CD8-positive, alpha-beta memory T cell (primary cell): ENCODE measurements at regions of chrX and their contacts with region 1.

Region 1: GRCh38 chrX:130079824-130080406 is 30.4 kb downstream of the ELF4 start:
- DNase-seq: peak; percentile 42 to 66 (median 54)
- H3K4me3 ChIP-seq: no peak overlapping the region
- H3K4me3 Mint-ChIP-seq: peak overlapping the region in 6 of 7 donors; percentile 3 to 70 (median 40)
- H3K27ac ChIP-seq: no peak overlapping the region
- H3K27ac Mint-ChIP-seq: peak overlapping the region; percentile 64 to 89 (median 84)
- H3K4me1 ChIP-seq: peaks cover 36% of the 10 kb centered on the region
- H3K4me1 Mint-ChIP-seq: peaks cover 46 to 54% (median 51%) of the 10 kb centered on the region in 3 donors
- H3K27me3 ChIP-seq: no peaks in the 10 kb centered on the region
- H3K27me3 Mint-ChIP-seq: peaks cover 0 to 3% of the 10 kb centered on the region in 2 donors

Region 2: DNA sequence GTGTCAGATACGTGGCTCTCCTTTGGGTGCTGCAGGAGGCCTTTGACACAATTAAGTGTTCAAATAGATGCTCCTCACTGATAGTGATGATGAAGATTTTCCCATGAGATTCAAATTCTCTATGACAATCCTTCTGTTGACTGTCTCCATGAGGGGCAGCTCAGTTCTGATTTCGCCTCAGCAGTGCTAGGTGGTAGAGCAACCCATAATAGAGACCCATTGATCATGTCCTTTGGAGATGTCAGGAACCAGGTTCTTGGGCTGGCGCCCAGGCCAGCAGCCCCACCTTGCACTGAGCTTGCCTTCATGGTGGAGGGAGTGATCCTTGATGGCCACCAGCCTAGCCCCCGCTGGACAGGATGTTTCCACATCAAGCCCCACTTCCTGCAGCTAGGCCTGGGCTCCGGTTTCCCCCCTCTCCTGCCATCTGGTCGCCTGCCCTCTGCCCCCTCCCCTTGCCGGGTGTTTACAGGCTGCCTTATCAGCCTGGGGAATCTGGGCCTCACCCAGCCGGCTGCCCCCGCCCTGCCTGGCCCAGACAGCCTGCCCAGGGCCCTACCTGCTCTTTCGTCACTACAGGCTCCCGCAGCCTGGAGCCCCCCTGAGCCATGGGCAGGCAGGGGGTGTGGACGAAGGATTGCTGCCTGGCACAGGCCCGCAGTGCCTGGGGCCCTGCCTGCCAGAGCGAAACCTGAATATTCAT is 17.7 kb after region 1 on chrX:
- CTCF ChIA-PET with region 1: interaction called, 12 read pairs
- POLR2A ChIA-PET with region 1: interaction called, 7 read pairs
- DNase-seq: peak in 4 of 5 donors; percentile 21 to 52 (median 43)
- H3K4me3 ChIP-seq: no peak overlapping the region
- H3K4me3 Mint-ChIP-seq: peak overlapping the region in 6 of 7 donors; percentile 41 to 71 (median 64)
- H3K27ac ChIP-seq: peak overlapping the region; percentile 9
- H3K27ac Mint-ChIP-seq: peak overlapping the region; percentile 84 to 98 (median 92)
- H3K4me1 ChIP-seq: peaks cover 65% of the 10 kb centered on the region
- H3K4me1 Mint-ChIP-seq: peaks cover 59 to 80% (median 70%) of the 10 kb centered on the region in 3 donors
- H3K27me3 ChIP-seq: no peaks in the 10 kb centered on the region
- H3K27me3 Mint-ChIP-seq: peaks cover 0 to 2% of the 10 kb centered on the region in 2 donors

Region 3: DNA sequence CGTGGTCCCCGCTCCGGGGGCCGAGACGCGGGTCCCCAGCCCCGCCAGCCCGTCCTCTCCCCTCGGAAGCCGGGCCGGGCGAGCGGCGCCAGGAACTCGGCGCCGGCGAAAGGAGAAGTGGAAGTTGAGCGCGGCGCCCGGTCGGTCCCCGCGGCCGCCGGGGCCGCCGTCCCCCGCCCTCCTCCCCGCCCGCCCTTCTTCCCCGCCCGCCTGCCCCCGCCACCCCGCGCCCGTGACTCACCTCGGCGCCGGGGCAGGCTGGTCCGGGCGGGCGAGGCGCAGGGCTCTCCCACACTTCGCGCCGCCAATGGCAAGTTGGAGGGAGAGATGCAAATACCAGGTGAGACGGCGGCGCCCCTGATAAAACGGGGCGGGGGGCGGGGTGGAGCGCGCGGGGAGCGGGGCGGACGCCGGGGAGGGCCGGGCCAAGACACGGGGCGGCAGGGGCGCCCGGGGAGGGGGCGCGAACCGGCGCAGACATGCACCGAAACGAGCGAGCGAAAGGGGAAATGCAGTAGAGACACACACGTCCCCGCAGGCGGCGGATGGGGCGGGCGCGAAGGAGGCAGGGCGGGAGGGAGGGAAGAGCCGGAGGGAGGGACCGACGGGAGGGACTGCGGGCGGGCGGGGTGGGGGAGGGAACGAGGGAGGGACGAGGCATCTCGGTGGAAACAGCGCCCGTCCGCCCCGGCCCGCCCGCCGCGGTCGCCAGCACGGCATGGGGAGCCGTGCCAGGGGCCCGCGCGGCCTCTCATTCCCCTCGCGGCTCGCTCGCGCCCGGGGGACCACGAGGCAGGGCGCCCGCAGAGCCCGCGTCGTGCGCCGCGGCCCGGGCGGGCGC is 30.7 kb after region 1 on chrX and contains the start of gene ELF4:
- CTCF ChIA-PET with region 1: interaction called, 36 read pairs
- POLR2A ChIA-PET with region 1: interaction called, 3 read pairs
- DNase-seq: peak; percentile 48 to 77 (median 55)
- H3K4me3 ChIP-seq: peak within 1 kb of the TSS; percentile 50
- H3K4me3 Mint-ChIP-seq: peak within 1 kb of the TSS; percentile 87 to 95 (median 89)
- H3K27ac ChIP-seq: peak within 1 kb of the TSS; percentile 70
- H3K27ac Mint-ChIP-seq: peak within 1 kb of the TSS; percentile 76 to 97 (median 90)
- H3K4me1 ChIP-seq: peaks cover 17% of the 10 kb centered on the region
- H3K4me1 Mint-ChIP-seq: peaks cover 31 to 47% (median 35%) of the 10 kb centered on the region in 3 donors
- H3K27me3 ChIP-seq: no peaks in the 10 kb centered on the region
- H3K27me3 Mint-ChIP-seq: peaks cover 0 to 2% of the 10 kb centered on the region in 2 donors
- total RNA-seq, gene ELF4: 23.8 to 24.7 TPM

Region 4: DNA sequence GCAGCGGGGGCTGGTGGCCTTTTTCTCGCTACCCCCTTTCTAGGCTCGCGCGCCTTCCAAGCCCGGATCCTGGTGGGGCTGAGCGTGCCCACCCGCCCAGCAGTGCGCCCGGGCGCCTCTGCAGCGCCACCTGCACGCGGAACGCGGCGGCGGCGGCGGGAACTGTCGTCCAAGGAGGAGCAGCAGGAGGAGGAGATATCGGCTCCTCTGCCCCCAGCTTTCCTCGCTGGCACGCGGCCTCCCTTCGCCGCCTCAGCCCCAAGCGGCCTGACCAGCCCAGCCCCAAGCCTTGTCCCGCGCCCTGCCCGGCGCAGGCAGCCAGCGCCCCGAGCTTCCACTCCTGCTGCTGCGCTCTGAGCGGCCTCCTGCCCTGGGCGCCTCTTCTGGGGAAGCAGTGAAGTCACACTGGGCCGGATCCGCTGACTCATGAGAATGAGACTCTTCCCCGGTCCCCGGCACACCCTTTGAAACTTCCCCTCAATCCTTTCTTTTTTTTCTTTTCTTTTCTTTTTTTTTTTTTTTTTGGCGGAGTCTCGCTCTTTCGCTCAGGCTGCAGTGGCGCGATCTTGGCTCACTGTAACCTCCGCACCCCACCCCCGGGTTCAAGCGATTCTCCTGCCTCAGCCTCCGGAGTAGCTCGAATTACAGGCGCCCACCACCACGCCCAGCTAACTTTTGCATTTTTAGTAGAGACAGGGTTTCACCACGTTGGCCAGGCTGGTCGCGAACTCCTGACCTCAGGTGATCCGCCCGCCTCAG is 41.0 kb after region 1 on chrX:
- CTCF ChIA-PET with region 1: interaction called, 133 read pairs
- POLR2A ChIA-PET with region 1: interaction called, 14 read pairs
- DNase-seq: peak; percentile 55 to 77 (median 68)
- H3K4me3 ChIP-seq: peak overlapping the region; percentile 41
- H3K4me3 Mint-ChIP-seq: peak overlapping the region; percentile 62 to 90 (median 72)
- H3K27ac ChIP-seq: peak overlapping the region; percentile 31
- H3K27ac Mint-ChIP-seq: peak overlapping the region in 4 of 8 donors; percentile 14 to 66 (median 38)
- H3K4me1 ChIP-seq: no peaks in the 10 kb centered on the region
- H3K4me1 Mint-ChIP-seq: peaks cover 9 to 26% (median 24%) of the 10 kb centered on the region in 3 donors
- H3K27me3 ChIP-seq: no peaks in the 10 kb centered on the region
- H3K27me3 Mint-ChIP-seq: peaks cover 0 to 6% of the 10 kb centered on the region in 2 donors

Region 5: DNA sequence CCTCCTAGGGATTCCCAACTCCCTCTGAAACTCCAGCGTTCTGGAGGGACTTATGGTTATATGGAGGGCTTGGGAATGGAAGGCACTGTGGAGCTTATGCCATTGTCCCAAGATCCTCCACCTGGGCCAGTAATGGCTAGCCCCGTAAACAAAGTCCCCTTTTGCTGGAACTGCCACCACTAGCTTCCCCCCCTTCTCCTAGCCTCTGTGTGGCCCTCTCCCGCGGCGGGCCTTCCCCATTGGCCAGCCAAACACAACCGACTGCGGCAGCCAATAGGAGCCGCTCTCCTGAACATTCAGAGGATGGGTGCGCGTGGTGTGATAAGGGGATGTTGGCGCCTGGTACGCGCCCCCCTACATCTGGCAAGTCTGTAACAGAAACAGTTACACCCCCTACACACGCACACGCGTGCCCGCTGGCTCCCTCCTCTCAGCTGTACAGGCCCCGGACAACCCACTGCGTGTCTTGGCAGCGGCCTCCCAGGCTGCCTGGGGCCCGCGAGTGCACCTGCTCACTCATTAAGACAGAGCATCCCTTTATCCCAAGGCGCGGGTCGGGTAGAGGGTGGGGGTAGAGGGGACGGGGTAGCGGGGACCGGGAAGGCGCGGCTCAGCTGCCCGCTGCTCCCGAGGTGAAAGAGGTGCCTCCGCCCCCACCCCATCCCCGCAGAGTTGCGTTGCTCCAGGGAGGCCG is 91.0 kb after region 1 on chrX:
- CTCF ChIA-PET with region 1: interaction called, 14 read pairs
- POLR2A ChIA-PET with region 1: interaction called, 5 read pairs
- DNase-seq: peak; percentile 45 to 75 (median 63)
- H3K4me3 ChIP-seq: peak overlapping the region; percentile 78
- H3K4me3 Mint-ChIP-seq: peak overlapping the region; percentile 86 to 96 (median 90)
- H3K27ac ChIP-seq: peak overlapping the region; percentile 47
- H3K27ac Mint-ChIP-seq: peak overlapping the region; percentile 78 to 94 (median 88)
- H3K4me1 ChIP-seq: peaks cover 27% of the 10 kb centered on the region
- H3K4me1 Mint-ChIP-seq: peaks cover 29 to 48% (median 41%) of the 10 kb centered on the region in 3 donors
- H3K27me3 ChIP-seq: no peaks in the 10 kb centered on the region
- H3K27me3 Mint-ChIP-seq: peaks cover 0 to 6% of the 10 kb centered on the region in 2 donors

Region 6: DNA sequence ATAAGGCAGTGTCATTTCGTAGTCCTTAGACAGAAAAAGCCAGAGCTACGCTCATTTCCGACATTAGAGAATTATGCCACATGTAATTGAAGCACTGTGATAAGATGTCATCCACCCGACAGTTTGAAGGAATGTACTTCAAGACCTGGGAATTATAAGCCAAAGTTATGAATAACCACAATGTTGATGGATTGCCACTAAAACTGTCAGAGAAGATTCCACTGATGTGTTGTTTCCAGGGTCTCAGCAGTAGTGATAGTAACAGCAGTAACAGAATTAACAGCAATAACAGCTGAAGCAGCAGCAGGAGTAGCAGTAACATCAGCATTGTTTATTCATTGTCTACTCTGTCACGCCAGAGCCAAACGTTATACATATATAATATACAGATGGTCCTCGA is 116.6 kb after region 1 on chrX:
- CTCF ChIA-PET with region 1: interaction called, 63 read pairs
- POLR2A ChIA-PET with region 1: no interaction called
- DNase-seq: no peak
- H3K4me3 ChIP-seq: no peak overlapping the region
- H3K4me3 Mint-ChIP-seq: no peak overlapping the region
- H3K27ac ChIP-seq: no peak overlapping the region
- H3K27ac Mint-ChIP-seq: no peak overlapping the region
- H3K4me1 ChIP-seq: no peaks in the 10 kb centered on the region
- H3K4me1 Mint-ChIP-seq: peaks cover 3 to 4% (median 4%) of the 10 kb centered on the region in 3 donors
- H3K27me3 ChIP-seq: no peaks in the 10 kb centered on the region
- H3K27me3 Mint-ChIP-seq: no peaks in the 10 kb centered on the region